PC-3 (cell line): ENCODE measurements at regions of chr5 and their contacts with region 1.

Region 1: GRCh38 chr5:95730730-95731570 is at the start of gene RHOBTB3:
- DNase-seq: peak; percentile 76
- ATAC-seq: peak; percentile 68
- H3K4me3 ChIP-seq: peak within 1 kb of the TSS; percentile 90
- H3K27ac ChIP-seq: no peak within 1 kb of the TSS
- H3K4me1 ChIP-seq: peaks cover 34% of the 10 kb centered on the region
- H3K27me3 ChIP-seq: no peaks in the 10 kb centered on the region
- CTCF ChIP-seq: no peak
- total RNA-seq, gene RHOBTB3: 14.2 and 16.3 TPM in 2 replicates

Region 2: DNA sequence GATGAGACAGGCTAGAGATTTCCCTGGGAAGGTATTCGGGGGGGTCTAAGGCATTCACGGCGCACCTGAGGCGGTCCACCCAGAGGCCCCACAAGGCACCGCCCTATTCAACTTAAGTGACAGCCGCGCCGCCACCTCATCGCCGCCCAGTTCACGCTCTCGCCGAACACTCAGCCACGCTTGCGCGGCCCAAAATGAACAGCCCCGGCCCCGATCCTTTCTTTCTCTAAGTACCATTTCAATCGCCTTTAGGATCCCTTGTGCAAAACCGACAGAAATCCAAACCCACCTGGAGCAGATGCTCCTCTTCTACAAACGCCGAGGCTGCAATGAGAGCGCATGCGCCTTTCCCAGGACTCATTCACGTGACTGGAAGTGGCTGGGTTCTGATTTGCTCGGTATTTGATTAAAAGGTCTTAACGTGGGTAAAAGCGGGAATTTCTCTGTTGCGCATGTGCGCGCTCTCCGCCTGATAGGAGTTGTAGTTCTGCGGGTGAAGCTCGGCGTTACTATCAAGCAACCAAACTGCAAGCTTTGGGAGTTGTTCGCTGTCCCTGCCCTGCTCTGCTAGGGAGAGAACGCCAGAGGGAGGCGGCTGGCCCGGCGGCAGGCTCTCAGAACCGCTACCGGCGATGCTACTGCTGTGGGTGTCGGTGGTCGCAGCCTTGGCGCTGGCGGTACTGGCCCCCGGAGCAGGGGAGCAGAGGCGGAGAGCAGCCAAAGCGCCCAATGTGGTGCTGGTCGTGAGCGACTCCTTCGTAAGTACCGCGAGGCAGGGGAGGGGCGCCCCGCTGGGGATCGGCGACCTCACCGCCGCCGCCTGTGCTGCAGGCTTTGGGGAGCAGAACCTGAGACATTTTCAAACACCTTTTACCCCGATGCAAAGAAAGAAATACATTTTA is 176.1 kb before region 1 on chr5 and contains the starts of genes ARSK and SKIC3:
- CTCF ChIA-PET with region 1: no interaction called
- POLR2A ChIA-PET with region 1: no interaction called
- intact Hi-C with region 1: loop called (anchors 10 kb)
- DNase-seq: peak; percentile 99
- ATAC-seq: peak; percentile 89
- H3K4me3 ChIP-seq: peak within 1 kb of the TSS; percentile 78
- H3K27ac ChIP-seq: peak within 1 kb of the TSS; percentile 74
- H3K4me1 ChIP-seq: peaks cover 9% of the 10 kb centered on the region
- H3K27me3 ChIP-seq: no peaks in the 10 kb centered on the region
- CTCF ChIP-seq: 0 out of 2 replicates have a peak, but pooled peaks have one; percentile 36
- total RNA-seq, gene ARSK: 10.5 and 12.6 TPM in 2 replicates
- total RNA-seq, gene SKIC3: 27.8 and 37.6 TPM in 2 replicates

Region 3: DNA sequence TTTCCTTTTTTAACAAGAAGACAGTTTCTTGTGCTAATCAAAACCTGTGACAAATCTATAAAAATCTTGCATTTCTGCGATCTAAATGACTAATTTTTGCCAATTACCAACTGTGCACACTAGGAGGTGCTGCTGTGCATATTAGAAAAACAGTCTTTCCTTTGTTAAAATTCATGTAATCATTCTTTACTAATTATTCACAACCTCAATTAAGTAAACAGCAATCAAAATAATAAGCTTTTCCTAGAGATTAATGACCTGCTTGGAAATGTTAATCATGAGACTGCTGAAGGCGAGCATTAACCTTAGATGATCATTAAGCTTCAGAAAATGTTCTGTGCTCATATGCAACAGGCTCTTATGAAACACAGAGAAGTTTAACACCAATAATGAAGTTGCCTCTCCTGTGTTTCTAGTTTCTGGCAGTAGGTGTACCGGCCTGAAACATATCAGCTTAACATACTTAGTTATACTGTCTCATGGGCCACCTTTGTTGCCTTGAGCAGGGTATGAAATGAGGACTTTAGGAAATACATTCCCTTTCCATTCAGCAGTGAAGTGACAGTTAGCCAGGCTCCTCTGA is 66.7 kb before region 1 on chr5:
- CTCF ChIA-PET with region 1: no interaction called
- POLR2A ChIA-PET with region 1: no interaction called
- intact Hi-C with region 1: loop called (anchors 2 kb)
- DNase-seq: peak; percentile 63
- ATAC-seq: peak; percentile 49
- H3K4me3 ChIP-seq: no peak overlapping the region
- H3K27ac ChIP-seq: no peak overlapping the region
- H3K4me1 ChIP-seq: no peaks in the 10 kb centered on the region; the same call in 1 of the 2 replicates
- H3K27me3 ChIP-seq: no peaks in the 10 kb centered on the region
- CTCF ChIP-seq: peak; percentile 93

Region 4: DNA sequence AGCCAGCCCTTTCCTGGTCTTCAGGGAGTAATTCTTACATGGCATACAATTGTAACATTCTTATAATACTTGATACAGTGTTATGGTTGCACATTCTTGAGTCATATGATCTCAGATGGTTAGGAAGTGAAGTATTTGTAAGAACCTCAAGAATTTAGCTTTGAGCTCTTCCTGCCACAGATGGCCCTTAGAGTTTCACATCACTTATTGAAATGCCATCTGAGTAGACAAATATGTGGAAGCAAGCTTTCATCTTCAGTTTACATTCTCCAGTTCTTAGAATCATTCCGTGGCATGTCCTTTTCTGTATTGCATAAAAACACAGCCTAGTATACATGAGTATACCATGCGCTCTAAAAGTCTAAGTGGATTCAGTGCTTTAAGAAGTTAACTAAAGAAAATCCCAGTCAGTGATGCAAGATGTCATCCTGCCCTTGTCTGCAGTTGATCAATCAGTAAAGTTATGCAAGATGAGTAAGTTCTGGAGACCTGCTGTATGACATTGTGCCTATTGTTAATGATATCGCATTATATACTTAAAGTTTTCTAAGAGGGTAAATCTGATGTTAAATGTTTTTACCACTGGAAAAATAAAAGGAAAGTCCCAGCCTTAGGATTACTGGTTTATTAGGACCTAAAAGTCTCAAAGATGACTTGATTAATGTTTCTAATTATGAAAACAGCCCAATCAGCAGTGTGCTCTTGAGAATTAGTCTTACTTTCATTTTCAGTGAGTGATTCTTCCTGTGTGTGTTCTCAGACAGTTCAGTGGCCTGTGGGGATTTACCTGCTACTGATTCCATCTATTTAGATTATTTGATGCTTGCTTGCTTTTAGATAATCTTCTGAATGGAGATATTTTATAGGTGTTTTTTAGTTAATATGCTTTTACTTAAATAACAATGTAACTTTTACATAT is 29.6 kb after region 1 on chr5:
- CTCF ChIA-PET with region 1: no interaction called
- POLR2A ChIA-PET with region 1: no interaction called
- intact Hi-C with region 1: loop called (anchors 2 kb)
- DNase-seq: peak; percentile 49
- ATAC-seq: peak; percentile 64
- H3K4me3 ChIP-seq: no peak overlapping the region
- H3K27ac ChIP-seq: peak overlapping the region; percentile 40; the same call in 1 of the 2 replicates
- H3K4me1 ChIP-seq: peaks cover 35% of the 10 kb centered on the region
- H3K27me3 ChIP-seq: no peaks in the 10 kb centered on the region
- CTCF ChIP-seq: no peak

Region 5: DNA sequence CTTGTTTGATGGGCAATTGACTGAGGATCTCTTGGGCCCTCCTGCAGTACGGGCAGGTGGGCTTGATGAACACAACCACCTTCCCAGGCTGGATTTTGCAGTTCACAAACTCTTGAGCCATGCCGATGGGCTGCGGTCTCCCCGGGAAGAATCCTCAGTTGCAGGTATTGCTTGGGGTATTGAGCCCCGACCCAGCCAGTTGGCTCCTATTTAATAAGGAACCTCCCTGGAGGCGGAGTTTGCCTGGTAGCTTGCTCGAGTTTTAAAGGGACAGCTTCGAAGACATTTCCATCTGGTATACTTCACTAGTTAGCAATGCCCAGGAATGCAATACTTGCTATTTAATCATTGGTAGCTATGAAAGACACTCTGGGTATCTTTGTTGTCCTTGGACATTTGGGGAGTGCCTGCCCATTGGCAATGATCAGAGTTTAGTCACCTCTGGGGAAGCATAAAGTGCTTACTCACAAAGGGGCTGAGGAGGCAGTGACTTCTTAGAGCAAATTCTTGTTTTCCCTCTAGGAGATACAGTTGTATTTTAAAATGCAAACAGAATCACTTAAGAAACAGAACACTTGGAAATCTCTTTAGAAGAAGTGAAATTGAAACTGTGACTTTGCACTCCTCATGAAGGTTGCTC is 91.7 kb after region 1 on chr5 and contains the start of gene GLRX:
- CTCF ChIA-PET with region 1: no interaction called
- POLR2A ChIA-PET with region 1: no interaction called
- intact Hi-C with region 1: loop called (anchors 5 kb)
- DNase-seq: peak; percentile 91
- ATAC-seq: peak; percentile 70
- H3K4me3 ChIP-seq: peak within 1 kb of the TSS; percentile 73
- H3K27ac ChIP-seq: peak within 1 kb of the TSS; percentile 96
- H3K4me1 ChIP-seq: peaks cover 34% of the 10 kb centered on the region
- H3K27me3 ChIP-seq: no peaks in the 10 kb centered on the region
- CTCF ChIP-seq: no peak
- total RNA-seq, gene GLRX: 24.6 and 27.4 TPM in 2 replicates

Region 6: GRCh38 chr5:95961617-95962474 is 230.9 kb after region 1 on chr5 and contains the start of gene ELL2:
- CTCF ChIA-PET with region 1: no interaction called
- POLR2A ChIA-PET with region 1: no interaction called
- intact Hi-C with region 1: no loop called
- DNase-seq: peak; percentile 93
- ATAC-seq: peak; percentile 78
- H3K4me3 ChIP-seq: peak within 1 kb of the TSS; percentile 99
- H3K27ac ChIP-seq: peak within 1 kb of the TSS; percentile 82
- H3K4me1 ChIP-seq: peaks cover 72% of the 10 kb centered on the region
- H3K27me3 ChIP-seq: no peaks in the 10 kb centered on the region
- CTCF ChIP-seq: no peak
- total RNA-seq, gene ELL2: 72.2 and 82.4 TPM in 2 replicates